Right ventricle myocardium inferior (tissue), 1 donor: ENCODE measurements at regions of chr4 and their contacts with region 1.

Region 1: GRCh38 chr4:148044912-148045352 is 313.0 kb downstream of the ARHGAP10 start:
- DNase-seq: no peak
- ATAC-seq: peak; percentile 49

Region 2: GRCh38 chr4:148079961-148080360 is 35.0 kb after region 1 on chr4:
- intact Hi-C with region 1: no loop called
- DNase-seq: no peak
- ATAC-seq: peak; percentile 41

Region 3: DNA sequence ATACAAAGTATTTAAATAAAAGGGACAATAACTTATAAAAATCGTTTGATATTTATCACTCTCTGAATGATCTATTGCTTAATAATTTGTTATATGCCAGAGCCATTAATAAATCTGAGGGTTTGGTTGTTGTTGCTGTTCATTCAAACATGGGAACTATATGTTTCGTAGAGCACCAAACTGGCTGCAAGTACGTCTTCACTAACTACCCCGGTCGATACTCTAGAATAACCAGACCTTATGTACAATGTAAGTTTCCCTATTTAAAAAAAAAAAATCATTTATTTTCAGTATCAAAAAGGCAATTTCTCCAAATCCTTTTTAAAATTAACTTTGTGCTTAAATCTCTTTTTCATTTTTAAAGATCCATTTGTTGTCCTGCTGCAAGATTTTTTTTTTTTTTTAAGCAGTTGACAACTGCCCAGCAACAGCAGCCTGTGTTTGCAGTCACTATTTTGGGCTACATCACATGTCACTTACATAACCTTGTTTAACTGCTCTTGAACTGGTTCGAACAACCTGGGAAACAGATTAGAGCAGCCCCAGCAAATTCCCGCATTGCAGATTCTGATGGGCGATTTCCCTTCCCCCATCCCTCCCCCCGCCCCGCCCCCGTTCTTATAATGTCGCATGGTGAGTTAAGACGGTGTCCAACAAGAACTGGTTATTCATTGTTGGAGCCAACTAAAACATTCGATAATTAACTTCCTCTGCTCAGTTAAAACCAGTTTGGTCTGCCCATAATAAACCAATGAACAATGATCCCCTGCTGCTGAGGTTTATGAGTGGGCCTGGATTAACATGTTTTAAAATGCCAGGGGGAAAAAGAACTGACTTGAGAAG is 158.3 kb after region 1 on chr4:
- intact Hi-C with region 1: loop called (anchors 10 kb)
- DNase-seq: no peak
- ATAC-seq: peak; percentile 84